ENCODE measurements at regions of chr18 and their contacts with region 1.

Region 1: DNA sequence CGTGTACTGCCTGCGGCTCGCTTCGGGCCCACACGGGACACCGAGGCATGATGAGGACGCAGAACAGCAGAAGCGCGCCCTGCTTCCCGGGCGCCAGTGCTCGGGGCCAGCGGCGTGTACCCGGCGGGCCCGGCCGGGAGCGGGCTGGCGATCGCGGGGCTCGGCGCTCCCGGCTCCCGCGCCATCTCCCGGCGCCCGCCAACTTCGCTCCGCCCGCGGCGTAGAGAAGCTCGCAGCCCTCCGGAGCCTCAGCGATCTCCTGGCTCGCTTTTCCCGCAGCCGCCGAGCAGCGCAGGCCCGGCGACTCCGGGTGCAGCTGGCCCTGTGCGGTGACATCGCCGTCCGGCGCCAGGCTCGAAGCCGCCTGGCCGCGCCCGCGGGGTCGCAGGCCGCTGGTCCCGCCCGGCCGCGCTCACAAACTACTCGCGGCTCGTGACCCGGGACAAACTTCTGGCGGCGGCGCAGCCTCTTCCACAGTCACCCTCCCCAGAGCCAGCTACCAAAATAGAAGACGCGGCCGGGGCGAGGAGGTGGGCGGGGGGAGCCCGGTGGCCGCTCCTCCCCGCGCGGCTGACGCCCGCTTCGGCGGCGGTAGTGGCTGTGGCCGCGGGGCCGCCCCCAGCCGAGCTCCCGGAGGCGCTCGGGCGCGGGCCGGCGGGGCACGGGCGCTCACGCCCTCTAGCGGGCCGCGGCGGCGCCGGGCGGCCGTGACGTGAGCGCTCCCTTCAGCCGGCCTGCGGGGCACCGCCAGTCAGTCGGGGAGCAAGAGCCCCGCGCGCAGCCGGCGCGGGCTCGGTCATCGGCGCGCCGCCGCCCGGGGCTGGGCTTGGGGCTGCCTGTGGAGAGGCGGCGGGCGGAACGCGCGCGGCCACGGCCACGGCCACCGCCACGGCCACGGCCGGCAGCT is at the start of gene PTPRM:
- DNase-seq: peak; percentile 93 to 97
- ATAC-seq: peak; percentile 94
- H3K4me3 ChIP-seq: peak within 1 kb of the TSS; percentile 89 to 92
- H3K27ac ChIP-seq: peak within 1 kb of the TSS; percentile 97 to 99
- H3K4me1 ChIP-seq: no peaks in the 10 kb centered on the region
- H3K27me3 ChIP-seq: no peaks in the 10 kb centered on the region
- total RNA-seq, gene PTPRM: 86.3 to 98.9 TPM

Region 2: GRCh38 chr18:7272311-7273049 is 294.3 kb before region 1 on chr18:
- intact Hi-C with region 1: loop called in 1 of 2 experiments (anchors 5 kb)
- DNase-seq: peak; percentile 78 to 86
- ATAC-seq: peak; percentile 86
- H3K4me3 ChIP-seq: no peak overlapping the region
- H3K27ac ChIP-seq: no peak overlapping the region
- H3K4me1 ChIP-seq: no peaks in the 10 kb centered on the region
- H3K27me3 ChIP-seq: no peaks in the 10 kb centered on the region

Region 3: GRCh38 chr18:7608781-7609201 is 42.0 kb after region 1 on chr18:
- intact Hi-C with region 1: loop called (anchors 2 to 5 kb)
- DNase-seq: no peak
- ATAC-seq: peak; percentile 68
- H3K4me3 ChIP-seq: no peak overlapping the region
- H3K27ac ChIP-seq: peak overlapping the region; percentile 47 to 96
- H3K4me1 ChIP-seq: peaks cover 2 to 17% of the 10 kb centered on the region in 2 donors
- H3K27me3 ChIP-seq: no peaks in the 10 kb centered on the region

Region 4: DNA sequence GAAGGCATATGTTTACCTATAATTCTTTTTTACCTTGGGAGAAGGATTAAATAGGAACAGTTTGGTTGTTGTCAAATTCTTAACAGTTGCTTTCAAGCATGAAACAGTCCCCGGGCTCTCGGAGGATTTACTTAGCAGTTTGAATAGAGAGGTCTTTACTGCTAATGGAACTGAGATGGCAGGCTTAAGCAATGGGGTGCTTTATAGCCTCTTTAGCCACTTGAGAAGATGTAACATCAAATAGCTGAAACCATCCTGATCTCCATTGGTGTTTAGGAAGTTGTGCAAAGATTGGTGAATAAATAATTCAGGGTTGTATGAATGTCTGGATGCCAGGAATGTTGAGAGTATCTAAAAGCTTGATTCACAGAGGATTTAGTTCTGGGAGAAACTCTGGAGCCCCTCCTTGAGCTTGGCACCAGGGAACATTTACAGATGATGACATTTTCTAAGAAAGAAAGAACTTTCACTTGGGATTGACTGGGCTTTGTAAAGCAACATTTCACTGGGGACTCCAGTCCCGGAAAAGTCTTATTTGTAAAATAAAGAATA is 52.1 kb after region 1 on chr18:
- intact Hi-C with region 1: no loop called
- DNase-seq: no peak
- ATAC-seq: no peak
- H3K4me3 ChIP-seq: no peak overlapping the region
- H3K27ac ChIP-seq: no peak overlapping the region
- H3K4me1 ChIP-seq: peaks cover 0 to 3% of the 10 kb centered on the region in 2 donors
- H3K27me3 ChIP-seq: no peaks in the 10 kb centered on the region

Region 5: DNA sequence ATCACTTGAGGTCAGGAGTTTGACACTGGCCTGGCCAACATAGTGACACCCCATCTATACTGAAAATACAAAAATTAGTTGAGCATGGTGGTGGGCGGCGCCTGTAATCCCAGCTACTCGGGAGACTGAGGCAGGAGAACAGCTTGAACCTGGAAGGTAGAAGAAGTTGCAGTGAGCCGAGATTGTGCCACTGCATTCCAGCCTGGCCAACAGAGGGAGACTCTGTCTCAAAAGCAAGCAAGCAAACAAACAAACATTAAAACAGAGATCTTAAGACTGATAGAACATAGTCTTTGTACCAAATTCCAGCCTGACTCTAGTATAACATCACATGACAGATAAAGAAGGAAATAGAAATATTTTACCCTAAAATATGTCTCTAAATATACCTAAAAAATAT is 168.4 kb after region 1 on chr18:
- intact Hi-C with region 1: no loop called
- DNase-seq: no peak
- ATAC-seq: no peak
- H3K4me3 ChIP-seq: no peak overlapping the region
- H3K27ac ChIP-seq: no peak overlapping the region
- H3K4me1 ChIP-seq: peaks cover 2 to 3% of the 10 kb centered on the region in 2 donors
- H3K27me3 ChIP-seq: no peaks in the 10 kb centered on the region

Region 6: GRCh38 chr18:7755753-7756475 is 189.1 kb after region 1 on chr18:
- intact Hi-C with region 1: loop called (anchors 5 kb)
- DNase-seq: no peak
- ATAC-seq: peak; percentile 39
- H3K4me3 ChIP-seq: no peak overlapping the region
- H3K27ac ChIP-seq: no peak overlapping the region
- H3K4me1 ChIP-seq: peaks cover 0 to 2% of the 10 kb centered on the region in 2 donors
- H3K27me3 ChIP-seq: no peaks in the 10 kb centered on the region

Region 7: DNA sequence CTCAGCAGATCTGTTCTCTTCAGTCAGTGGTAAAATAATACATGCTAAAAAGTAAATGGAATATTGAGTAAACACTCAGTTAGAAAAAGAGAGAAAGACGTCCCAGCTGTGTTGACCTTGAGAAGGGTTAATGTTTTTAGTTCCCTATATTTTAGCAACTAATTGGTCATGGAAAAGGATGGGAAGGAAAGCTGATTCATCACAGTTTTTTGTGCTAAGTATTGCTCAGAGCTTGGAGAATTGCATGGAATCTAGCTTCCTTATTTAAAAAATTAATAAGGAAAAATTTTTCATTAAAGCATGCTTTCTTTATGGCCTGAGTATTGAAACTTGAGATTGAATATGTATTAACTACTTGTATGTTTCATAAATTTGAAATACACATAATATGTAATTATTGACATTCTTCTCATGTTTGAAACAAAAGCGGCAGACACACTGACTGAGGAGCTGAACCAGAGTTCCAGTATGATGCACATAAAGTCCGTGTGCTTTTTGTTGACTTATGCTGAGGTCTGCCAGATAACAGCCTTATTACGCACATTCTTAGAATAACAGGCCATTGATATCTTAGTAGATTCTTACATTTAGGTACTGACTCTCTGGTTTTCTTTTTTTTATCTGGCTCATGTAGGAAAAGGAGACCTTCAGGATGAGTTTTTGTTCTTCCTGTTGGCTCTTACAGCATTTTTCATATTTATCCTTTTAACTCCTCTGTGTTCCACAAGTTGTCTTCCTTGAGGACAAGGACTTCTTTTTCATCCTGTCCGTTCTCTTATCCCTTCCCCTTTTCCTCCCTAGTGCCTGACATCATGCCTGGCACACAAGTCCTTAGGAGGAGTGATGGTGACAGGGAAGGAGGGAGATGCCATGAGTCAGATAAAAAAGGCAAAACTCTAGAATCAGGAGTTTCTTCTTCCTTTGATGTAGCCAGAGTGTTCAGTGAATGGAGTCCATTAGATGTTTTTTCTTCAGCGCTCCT is 194.4 kb after region 1 on chr18:
- intact Hi-C with region 1: loop called in 1 of 2 experiments (anchors 5 kb)
- DNase-seq: no peak
- ATAC-seq: no peak
- H3K4me3 ChIP-seq: no peak overlapping the region
- H3K27ac ChIP-seq: no peak overlapping the region
- H3K4me1 ChIP-seq: no peaks in the 10 kb centered on the region
- H3K27me3 ChIP-seq: no peaks in the 10 kb centered on the region

Region 8: GRCh38 chr18:8196238-8196637 is 629.4 kb after region 1 on chr18:
- intact Hi-C with region 1: no loop called
- DNase-seq: no peak
- ATAC-seq: no peak
- H3K4me3 ChIP-seq: no peak overlapping the region
- H3K27ac ChIP-seq: no peak overlapping the region
- H3K4me1 ChIP-seq: peaks cover 0 to 3% of the 10 kb centered on the region in 2 donors
- H3K27me3 ChIP-seq: no peaks in the 10 kb centered on the region